A673 (cell line): ENCODE measurements at regions of chr17 and their contacts with region 1.

Region 1: DNA sequence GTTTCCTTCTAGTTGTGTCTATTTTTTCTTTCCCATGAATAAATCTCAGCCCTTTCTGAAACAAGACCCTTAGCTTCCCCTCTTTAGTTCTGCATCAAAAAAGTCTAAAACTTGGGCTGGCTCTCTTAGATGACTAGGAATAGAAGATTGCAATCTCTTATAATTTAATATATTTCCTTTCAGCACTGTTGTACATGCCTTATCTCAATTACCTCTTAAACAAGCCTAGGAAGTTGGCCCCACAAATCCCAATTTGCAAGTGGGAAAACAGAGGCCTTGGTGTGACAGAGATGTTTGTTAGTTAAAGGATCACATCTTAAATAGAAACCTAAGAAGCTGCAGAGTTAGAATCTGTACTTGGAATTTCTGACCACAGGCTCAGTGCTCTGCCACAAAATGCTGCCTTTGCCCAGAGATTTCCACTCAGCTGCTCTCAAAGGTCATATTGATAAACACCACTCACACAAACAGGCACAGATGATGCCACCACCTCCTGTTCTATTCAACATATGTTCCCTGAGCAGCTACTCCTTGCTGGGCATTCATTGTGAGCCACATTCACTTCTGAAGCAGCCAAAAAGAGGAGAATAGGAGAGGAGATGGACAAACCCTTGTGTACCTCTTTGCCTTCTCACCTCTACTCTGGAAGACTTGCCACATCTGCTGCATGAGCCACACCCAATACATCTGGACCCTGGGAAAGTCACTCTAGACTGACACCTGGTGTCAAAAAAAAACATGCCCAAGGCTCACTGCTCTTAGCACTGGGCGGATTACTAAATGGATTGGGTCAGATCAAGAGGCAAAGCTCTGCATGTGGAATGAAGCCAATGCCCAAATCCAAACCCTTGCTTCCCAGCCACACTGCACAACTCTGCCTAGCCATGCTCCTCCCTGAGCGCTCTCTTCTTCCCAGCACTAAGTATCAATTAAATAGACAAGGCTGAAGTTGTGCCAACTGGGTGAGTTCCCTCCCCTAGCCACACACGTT is 5.4 kb downstream of the CCDC182 start:
- DNase-seq: peak; percentile 54
- H3K4me3 ChIP-seq: no peak overlapping the region
- H3K27ac ChIP-seq: no peak overlapping the region
- H3K4me1 ChIP-seq: no peaks in the 10 kb centered on the region
- H3K27me3 ChIP-seq: no peaks in the 10 kb centered on the region
- CTCF ChIP-seq: peak; percentile 62

Region 2: DNA sequence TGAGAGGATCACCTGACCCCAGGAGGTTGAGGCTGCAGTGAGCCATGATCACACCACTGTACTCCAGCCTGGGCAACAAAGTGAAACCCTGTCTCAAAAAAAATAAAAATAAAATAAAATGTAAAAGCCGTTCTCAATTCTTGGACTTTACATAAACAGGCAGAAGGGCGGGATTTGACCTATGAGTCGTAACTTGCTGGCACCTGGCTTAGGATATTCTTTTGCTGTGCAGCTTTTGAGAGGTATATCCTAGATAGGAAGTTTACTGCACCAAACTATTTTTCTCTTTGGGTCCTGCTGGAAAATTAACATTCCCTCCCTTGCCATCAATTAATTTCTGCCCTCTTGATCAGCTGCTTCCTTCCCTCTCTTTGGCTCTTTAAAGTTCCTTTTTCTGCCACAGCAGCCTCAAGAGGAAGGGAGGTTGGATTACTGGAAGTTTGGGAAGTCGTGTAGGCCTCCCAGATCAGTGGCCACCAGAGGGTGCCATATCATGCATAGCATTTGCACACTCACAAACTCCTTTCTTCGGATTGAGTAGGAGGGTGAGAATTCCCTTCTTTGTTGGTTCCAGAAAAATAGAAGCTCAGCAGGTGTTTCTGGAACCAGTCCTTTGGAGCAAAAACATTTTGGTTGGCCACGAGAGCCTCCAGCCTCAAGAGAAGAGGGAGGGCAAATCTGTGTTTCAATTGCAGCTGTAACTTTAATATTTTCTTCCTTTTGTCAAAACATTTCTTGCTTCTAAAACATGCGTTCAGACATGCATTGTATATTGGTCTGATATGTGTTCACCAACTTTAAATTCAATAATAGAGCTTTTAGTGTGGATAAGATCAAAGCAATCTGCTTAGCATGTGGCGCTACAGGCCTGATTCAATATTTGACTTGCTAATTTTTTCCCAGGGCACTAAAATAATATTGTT is 141.9 kb before region 1 on chr17:
- CTCF ChIA-PET with region 1: no interaction called
- POLR2A ChIA-PET with region 1: no interaction called
- intact Hi-C with region 1: loop called (anchors 1 kb)
- DNase-seq: peak; percentile 85
- H3K4me3 ChIP-seq: no peak overlapping the region
- H3K27ac ChIP-seq: no peak overlapping the region
- H3K4me1 ChIP-seq: peaks cover 10% of the 10 kb centered on the region
- H3K27me3 ChIP-seq: no peaks in the 10 kb centered on the region
- CTCF ChIP-seq: peak; percentile 92

Region 3: GRCh38 chr17:57752031-57752905 is 12.6 kb after region 1 on chr17:
- CTCF ChIA-PET with region 1: no interaction called
- POLR2A ChIA-PET with region 1: no interaction called
- intact Hi-C with region 1: no loop called
- DNase-seq: no peak
- H3K4me3 ChIP-seq: no peak overlapping the region
- H3K27ac ChIP-seq: no peak overlapping the region
- H3K4me1 ChIP-seq: no peaks in the 10 kb centered on the region
- H3K27me3 ChIP-seq: no peaks in the 10 kb centered on the region
- CTCF ChIP-seq: no peak